OCI-LY7 (cell line): ENCODE measurements at regions of chr12 and their contacts with region 1.

Region 1: DNA sequence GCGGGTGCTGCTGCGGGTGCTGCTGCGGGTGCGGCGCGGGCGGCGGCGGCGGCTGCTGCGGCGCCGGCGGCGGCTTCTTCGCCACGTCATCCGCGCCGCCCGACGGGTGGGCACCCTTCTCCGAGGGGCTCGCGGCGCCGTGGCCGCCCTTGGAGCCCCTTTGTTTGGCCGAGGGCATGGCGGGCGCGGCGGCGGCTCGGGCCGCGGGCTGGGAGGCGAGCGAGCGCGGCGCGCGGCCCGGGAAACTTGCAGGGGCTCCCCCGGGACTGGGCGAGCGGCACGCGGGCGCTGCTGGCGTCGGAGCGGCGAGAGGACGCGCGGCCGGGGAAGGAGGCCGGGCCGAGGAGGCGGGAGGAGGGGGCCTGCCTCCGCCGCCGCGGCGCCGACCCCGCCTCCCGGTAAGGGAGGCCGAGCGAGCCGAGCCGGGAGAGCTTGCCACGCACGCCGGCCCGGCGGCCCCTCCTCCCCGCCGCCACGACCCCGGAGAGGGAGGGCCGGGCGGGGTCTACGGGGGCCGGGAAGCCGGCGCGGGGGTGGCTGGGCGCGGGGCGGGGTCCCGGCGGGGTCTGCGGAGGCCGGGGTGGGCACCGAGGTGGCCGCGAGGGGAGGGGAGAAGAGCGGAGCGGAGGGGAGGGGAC is at the start of gene CKAP4:
- DNase-seq: peak; percentile 74
- H3K4me3 ChIP-seq: peak within 1 kb of the TSS; percentile 84
- H3K27ac ChIP-seq: peak within 1 kb of the TSS; percentile 95
- H3K4me1 ChIP-seq: peaks cover 63% of the 10 kb centered on the region
- CTCF ChIP-seq: no peak
- total RNA-seq, gene CKAP4: 17.5 and 18.9 TPM in 2 replicates

Region 2: DNA sequence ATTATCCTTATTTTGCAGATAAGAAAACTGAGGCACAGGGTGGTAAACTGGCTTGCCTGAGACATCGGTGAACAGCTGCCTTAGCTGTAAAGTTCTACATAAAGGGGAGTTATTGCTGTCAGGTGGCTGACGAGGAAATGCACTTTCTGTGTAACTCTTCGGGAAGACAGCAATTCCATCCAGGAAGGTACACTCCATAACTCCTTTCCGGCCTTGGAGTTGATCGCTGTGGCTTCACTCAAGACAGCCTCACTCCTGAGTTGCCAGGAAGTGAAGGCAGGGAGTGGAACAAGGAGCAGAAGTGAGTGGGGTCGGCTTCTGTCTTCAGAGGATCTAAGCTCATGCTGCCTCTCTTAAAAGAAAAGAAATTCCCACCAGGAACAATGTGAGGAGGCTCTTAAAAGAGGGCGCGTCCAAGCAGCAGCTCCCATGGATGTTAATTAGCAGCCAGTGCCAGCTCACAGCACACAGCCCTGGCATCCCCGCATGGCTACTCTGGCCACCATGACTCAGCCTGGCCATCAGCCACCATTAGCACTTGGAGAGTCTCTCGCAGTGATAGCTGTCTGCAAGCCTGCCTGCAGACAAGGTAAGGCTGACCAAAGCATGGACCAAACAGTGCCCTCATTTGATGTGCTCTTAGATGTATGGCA is 169.3 kb before region 1 on chr12:
- CTCF ChIA-PET with region 1: no interaction called
- POLR2A ChIA-PET with region 1: no interaction called
- intact Hi-C with region 1: no loop called
- DNase-seq: no peak
- H3K4me3 ChIP-seq: no peak overlapping the region
- H3K27ac ChIP-seq: no peak overlapping the region
- H3K4me1 ChIP-seq: no peaks in the 10 kb centered on the region
- CTCF ChIP-seq: no peak

Region 3: DNA sequence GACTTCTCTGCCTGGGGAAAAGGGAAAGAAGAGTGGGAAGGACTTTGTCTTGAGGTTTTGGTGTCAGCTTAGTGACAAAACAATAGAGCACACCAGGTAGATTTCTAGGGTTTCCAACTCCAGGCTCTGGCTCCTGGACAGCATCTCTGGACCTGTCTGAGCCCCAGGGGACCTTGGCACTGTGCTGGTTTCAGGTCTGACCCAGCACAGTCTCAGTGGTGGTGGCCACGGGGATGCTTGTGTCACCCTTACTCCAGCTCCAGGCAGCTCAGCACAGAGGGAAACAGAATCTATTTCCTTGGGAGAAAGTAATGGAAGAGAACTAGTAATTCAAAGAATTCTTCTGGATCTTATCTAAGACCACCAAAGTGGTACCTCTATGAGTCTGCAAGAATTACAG is 11.1 kb after region 1 on chr12:
- CTCF ChIA-PET with region 1: no interaction called
- POLR2A ChIA-PET with region 1: interaction called, 22 read pairs
- intact Hi-C with region 1: no loop called
- DNase-seq: no peak
- H3K4me3 ChIP-seq: no peak overlapping the region
- H3K27ac ChIP-seq: no peak overlapping the region
- H3K4me1 ChIP-seq: no peaks in the 10 kb centered on the region
- CTCF ChIP-seq: no peak

Region 4: DNA sequence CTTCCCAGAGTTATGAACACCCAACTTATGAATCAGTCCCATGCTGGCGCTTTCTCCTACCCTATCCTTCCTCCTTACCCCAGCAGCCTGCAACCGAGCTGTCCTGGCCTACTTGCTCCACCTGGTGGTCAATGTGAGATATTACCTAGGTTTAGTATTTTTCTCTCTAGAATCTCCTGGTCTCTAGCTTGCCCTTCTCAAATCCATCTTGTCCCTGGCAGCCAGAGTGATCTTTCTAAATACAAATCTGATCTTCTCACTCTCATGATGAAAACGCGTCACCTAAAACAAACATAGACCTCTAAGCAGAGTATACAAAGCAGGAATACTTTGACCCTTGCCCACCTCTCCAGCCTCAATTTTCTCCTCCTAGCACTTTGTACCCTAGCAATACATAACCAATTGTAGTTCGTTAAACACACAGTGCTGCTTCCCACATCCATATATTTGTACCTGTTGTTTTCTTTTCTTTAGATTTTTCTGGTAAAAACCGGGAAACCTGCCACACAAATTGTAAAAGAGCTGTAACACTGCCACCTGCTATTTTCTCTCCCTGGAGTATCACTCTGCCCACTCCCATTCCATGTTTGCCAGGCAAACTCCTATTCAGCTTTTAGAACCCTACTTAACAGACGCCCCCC is 34.8 kb after region 1 on chr12:
- CTCF ChIA-PET with region 1: no interaction called
- POLR2A ChIA-PET with region 1: interaction called, 11 read pairs
- intact Hi-C with region 1: loop called (anchors 1 kb)
- DNase-seq: peak; percentile 82
- H3K4me3 ChIP-seq: no peak overlapping the region
- H3K27ac ChIP-seq: no peak overlapping the region
- H3K4me1 ChIP-seq: peaks cover 9% of the 10 kb centered on the region
- CTCF ChIP-seq: peak; percentile 94

Region 5: DNA sequence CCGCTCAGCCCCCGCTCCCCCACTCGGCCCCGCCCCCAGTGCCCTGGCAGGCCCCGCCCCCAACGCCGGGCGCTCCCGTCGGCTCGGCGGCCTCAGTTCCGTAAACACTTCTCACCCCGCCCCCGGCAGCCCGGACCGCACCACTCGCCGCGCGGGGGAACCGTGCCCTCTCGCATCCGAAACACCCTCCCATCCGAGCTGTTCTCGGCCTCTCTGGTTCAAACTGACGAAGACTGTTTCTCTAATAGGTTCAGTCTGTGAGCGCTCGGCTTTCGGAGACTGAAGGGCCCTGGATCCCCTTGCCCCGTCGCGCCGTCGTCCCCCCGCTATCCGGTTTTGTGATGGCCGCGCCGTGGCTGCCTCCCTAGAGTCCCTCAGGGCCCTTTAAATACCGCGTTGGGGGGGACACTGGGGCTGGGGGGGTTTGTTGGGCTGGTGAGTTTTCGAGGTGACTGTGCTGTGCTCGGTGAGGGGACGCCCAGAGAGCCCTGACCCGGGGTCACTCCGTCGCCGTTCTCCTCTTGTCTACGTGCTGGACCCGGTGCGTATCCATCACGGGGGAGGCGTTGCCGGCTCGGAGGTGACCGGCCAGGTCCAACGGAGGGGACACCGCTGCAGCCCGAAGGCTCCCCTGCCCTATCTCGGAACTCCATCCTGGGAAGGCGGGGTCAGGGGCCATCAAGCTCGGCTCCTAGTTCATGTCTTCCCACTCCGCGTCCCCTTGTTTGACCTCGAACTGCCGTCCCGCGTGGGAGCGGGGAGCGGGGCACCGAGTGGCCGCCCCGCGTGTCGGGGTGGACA is 54.8 kb after region 1 on chr12 and contains the start of gene TCP11L2:
- CTCF ChIA-PET with region 1: no interaction called
- POLR2A ChIA-PET with region 1: interaction called, 6 read pairs
- intact Hi-C with region 1: loop called (anchors 2 kb)
- DNase-seq: peak; percentile 89
- H3K4me3 ChIP-seq: peak within 1 kb of the TSS; percentile 95
- H3K27ac ChIP-seq: peak within 1 kb of the TSS; percentile 57
- H3K4me1 ChIP-seq: peaks cover 44% of the 10 kb centered on the region
- CTCF ChIP-seq: no peak
- total RNA-seq, gene TCP11L2: 1.2 and 1.8 TPM in 2 replicates

Region 6: GRCh38 chr12:106345739-106346138 is 97.9 kb after region 1 on chr12:
- CTCF ChIA-PET with region 1: no interaction called
- POLR2A ChIA-PET with region 1: no interaction called
- intact Hi-C with region 1: no loop called
- DNase-seq: peak; percentile 21
- H3K4me3 ChIP-seq: no peak overlapping the region
- H3K27ac ChIP-seq: no peak overlapping the region
- H3K4me1 ChIP-seq: no peaks in the 10 kb centered on the region
- CTCF ChIP-seq: peak; percentile 53